Activated CD4-positive, alpha-beta T cell treated with anti-CD3 and anti-CD28 coated beads, Interleukin-2, amount 10 ng/mL, durations not matched to agents 24 days and 14 days (primary cell): ENCODE measurements at regions of chr7 and their contacts with region 1.

Region 1: GRCh38 chr7:141014524-141015395 is at the start of gene MRPS33:
- DNase-seq: peak; percentile 98
- H3K4me3 Mint-ChIP-seq: peak within 1 kb of the TSS; percentile 99
- H3K27ac Mint-ChIP-seq: peak within 1 kb of the TSS; percentile 100
- H3K4me1 Mint-ChIP-seq: peaks cover 30% of the 10 kb centered on the region
- H3K27me3 Mint-ChIP-seq: peaks cover 19% of the 10 kb centered on the region
- total RNA-seq, gene MRPS33: 73.0 and 74.2 TPM in 2 replicates

Region 2: DNA sequence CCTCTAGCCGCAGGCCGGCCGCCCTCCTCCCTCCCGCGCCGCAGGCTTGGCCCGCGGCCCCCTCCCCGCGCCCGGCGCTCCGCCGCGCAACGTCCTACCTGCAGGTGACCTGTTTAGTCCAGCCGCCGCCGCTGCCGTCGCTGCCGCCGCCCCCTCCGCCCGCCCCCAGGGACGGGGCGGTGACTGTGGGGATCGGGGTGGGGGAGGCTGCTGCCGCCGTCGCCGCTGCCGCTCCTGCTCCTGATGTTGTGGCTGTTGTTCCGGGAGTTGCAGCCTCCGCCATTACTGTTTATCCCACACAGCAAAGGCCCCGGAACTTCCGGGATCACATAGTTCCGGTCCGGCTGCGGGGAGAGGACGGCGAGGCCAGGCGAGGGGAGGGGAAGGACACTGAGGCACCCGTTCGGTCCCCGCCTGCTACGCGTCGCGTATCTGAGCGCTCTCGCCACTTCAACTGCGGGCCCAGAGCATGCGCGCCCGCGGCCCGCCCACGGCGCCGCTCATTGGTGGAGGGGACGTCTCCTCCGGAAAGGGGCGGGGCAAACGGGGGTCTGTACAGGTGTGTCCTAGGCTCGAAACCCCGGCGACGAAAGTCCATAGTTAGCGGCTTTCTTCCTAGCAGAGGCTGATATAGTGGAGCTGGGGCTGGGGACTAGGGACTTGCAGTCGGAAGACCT is 535.6 kb before region 1 on chr7 and contains the start of gene MKRN1:
- intact Hi-C with region 1: loop called (anchors 1 kb)
- DNase-seq: peak; percentile 98
- H3K4me3 Mint-ChIP-seq: peak within 1 kb of the TSS; percentile 99
- H3K27ac Mint-ChIP-seq: peak within 1 kb of the TSS; percentile 97
- H3K4me1 Mint-ChIP-seq: peaks cover 26% of the 10 kb centered on the region
- H3K27me3 Mint-ChIP-seq: peaks cover 13% of the 10 kb centered on the region
- total RNA-seq, gene MKRN1: 59.7 and 67.5 TPM in 2 replicates

Region 3: GRCh38 chr7:140673063-140673773 is 341.5 kb before region 1 on chr7:
- intact Hi-C with region 1: loop called (anchors 1 kb)
- DNase-seq: peak; percentile 90
- H3K4me3 Mint-ChIP-seq: peak overlapping the region; percentile 89
- H3K27ac Mint-ChIP-seq: peak overlapping the region; percentile 87
- H3K4me1 Mint-ChIP-seq: peaks cover 31% of the 10 kb centered on the region
- H3K27me3 Mint-ChIP-seq: peaks cover 4% of the 10 kb centered on the region

Region 4: DNA sequence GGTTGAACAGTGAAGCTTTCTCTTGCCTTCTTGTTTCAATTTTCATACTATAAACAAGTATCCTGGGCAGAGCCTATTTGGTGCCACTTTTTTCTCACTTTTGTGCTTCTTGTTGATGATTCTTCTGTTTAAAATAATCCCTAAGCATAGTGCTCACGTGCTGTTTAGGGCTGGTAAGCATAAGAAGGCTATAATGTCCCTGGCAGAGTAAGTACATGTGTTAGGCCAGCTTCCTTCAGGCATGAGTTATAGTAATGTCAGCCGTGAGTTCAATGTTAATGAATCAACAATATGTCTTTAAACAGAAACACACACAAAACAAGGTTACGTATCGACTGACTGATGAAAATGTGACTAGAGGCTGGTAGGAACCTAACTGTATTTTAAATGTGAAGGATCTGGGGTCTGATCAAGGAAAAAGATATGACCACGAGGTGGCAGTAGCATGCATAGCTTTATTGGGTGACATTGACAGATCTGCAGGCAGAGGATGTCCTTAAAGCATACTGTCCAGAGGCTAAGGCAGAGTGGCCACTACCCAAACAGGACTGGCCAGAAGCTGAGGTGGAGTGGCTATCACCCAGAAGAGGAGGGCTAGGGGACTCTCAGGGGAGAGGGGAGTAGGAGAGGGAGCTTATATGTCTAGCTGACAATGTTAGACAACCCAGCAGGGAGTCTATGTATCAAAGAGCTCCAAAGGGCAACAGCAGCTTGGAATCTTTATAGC is 203.8 kb before region 1 on chr7:
- intact Hi-C with region 1: loop called (anchors 1 kb)
- DNase-seq: peak; percentile 90
- H3K4me3 Mint-ChIP-seq: no peak overlapping the region
- H3K27ac Mint-ChIP-seq: no peak overlapping the region
- H3K4me1 Mint-ChIP-seq: no peaks in the 10 kb centered on the region
- H3K27me3 Mint-ChIP-seq: no peaks in the 10 kb centered on the region

Region 5: GRCh38 chr7:140990193-140990962 is 24.4 kb before region 1 on chr7:
- intact Hi-C with region 1: no loop called
- DNase-seq: no peak
- H3K4me3 Mint-ChIP-seq: no peak overlapping the region
- H3K27ac Mint-ChIP-seq: no peak overlapping the region
- H3K4me1 Mint-ChIP-seq: no peaks in the 10 kb centered on the region
- H3K27me3 Mint-ChIP-seq: peaks cover 17% of the 10 kb centered on the region

Region 6: DNA sequence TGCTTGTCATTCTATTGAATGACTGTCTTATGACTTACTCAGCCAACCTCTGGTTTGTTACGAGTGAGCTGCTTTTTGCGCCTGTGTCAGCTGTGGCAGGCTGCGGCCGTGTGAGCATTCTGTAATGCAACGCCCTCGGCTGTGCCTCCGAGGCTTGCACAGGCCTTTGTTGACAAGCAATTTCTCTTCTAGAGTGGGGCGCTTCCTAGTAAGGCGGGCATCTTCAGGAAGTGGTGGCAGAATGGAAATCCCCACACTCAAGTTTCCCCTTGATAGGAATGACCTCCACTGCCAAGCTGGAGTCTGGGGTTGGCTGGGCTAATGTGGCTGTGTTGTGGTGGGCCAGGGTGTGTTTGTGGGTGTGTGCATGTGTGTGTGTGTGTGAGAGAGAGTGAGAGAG is 38.9 kb after region 1 on chr7:
- intact Hi-C with region 1: loop called (anchors 2 kb)
- DNase-seq: peak; percentile 89
- H3K4me3 Mint-ChIP-seq: peak overlapping the region; percentile 16
- H3K27ac Mint-ChIP-seq: peak overlapping the region; percentile 83
- H3K4me1 Mint-ChIP-seq: peaks cover 20% of the 10 kb centered on the region
- H3K27me3 Mint-ChIP-seq: peaks cover 21% of the 10 kb centered on the region

Region 7: DNA sequence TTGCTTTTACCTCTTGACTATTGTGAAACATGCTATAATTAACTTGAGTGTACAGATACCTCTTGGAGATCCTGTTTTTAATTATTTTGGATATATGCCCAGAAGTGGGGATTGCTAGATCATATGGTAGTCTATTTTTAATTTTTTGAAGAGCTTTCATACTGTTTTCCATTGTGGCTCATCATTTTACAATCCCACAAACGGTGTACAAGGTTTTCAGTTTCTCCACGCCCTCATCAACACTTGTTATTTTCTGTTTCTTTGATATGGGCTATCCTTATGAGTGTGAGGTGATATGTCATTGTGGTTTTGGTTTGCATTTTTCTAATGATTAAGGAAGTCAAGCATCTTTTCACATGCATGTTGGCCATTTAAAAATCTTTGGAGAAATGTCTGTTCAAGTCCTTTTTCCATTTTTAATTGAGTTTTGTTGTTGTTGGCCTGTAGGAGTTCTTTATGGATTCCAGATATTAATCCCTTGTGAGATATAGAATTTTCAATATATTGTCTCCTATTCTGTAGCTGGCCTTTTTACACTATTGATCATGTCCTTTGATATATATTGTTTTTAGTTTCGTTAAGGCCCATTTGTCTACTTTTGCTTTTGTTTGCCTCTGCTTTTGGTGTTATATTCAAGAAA is 543.9 kb after region 1 on chr7:
- intact Hi-C with region 1: loop called (anchors 1 kb)
- DNase-seq: peak; percentile 79
- H3K4me3 Mint-ChIP-seq: peak overlapping the region; percentile 59
- H3K27ac Mint-ChIP-seq: peak overlapping the region; percentile 86
- H3K4me1 Mint-ChIP-seq: peaks cover 63% of the 10 kb centered on the region
- H3K27me3 Mint-ChIP-seq: no peaks in the 10 kb centered on the region